ENCODE measurements at regions of chr6 and their contacts with region 1.

Region 1: GRCh38 chr6:31958741-31959739 is at the starts of genes NELFE and SKIC2:
- DNase-seq: peak in 1 of 2 donors; percentile 98
- H3K4me3 ChIP-seq: peak within 1 kb of the TSS; percentile 63 to 79
- H3K27ac ChIP-seq: peak within 1 kb of the TSS; percentile 77
- H3K4me1 ChIP-seq: peaks cover 25% of the 10 kb centered on the region
- H3K27me3 ChIP-seq: no peaks in the 10 kb centered on the region
- CTCF ChIP-seq: no peak
- POLR2A ChIP-seq: peak in 1 of 2 donors; percentile 4
- total RNA-seq, gene NELFE: 100 TPM
- total RNA-seq, gene SKIC2: 35.4 TPM

Region 2: DNA sequence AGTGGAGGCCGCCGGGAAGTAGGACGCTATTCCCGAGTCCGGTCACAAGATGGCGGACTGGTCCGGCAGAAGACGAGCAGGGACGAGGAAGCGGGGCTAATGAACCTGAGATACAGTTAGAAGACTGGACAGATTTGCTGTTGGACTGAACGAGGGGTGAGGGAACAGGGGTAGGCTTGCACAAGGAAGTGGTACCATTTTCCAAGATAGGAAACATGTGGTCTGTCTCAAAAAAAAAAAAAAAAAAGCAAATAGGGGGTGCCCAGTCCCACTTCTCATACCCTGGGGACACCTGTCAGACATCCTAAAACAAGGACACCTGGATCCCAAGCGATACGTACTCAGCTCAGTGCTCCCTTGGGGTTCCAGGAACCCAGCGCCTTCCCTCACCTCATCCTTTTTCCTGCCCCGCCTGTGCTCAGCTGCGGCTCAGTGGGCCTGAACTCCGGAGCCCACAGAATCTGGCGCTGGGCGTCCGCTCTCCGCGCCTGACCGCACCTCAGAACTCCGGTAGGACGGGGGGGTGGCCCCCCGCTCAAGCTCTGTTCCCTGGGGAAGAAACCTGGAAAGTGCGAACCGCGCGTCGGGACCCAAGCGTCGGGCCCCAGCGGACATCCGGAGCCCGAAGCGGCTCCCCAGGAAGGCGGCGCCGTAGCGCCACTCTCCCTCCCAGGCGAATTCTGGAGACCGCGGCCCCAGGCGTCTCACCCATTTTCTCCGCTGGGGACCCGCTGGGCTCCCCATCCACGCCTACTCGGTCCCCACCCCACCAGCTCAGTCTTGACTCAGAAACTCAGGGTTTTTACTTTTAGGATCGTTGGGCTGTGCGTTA is 278.0 kb before region 1 on chr6 and contains the start of gene LY6G5C:
- intact Hi-C with region 1: loop called (anchors 10 kb)
- DNase-seq: peak in 1 of 2 donors; percentile 96
- H3K4me3 ChIP-seq: peak within 1 kb of the TSS; percentile 55 to 59
- H3K27ac ChIP-seq: peak within 1 kb of the TSS; percentile 92
- H3K4me1 ChIP-seq: peaks cover 25% of the 10 kb centered on the region
- H3K27me3 ChIP-seq: no peaks in the 10 kb centered on the region
- CTCF ChIP-seq: peak; percentile 50 to 69 (median 69)
- POLR2A ChIP-seq: no peak
- total RNA-seq, gene LY6G5C: 1.7 TPM

Region 3: GRCh38 chr6:32107406-32107805 is 148.4 kb after region 1 on chr6:
- intact Hi-C with region 1: no loop called
- DNase-seq: no peak
- H3K4me3 ChIP-seq: peak overlapping the region; percentile 21 to 60
- H3K27ac ChIP-seq: peak overlapping the region; percentile 94
- H3K4me1 ChIP-seq: peaks cover 77% of the 10 kb centered on the region
- H3K27me3 ChIP-seq: no peaks in the 10 kb centered on the region
- CTCF ChIP-seq: no peak
- POLR2A ChIP-seq: no peak

Region 4: GRCh38 chr6:32203426-32204247 is 244.6 kb after region 1 on chr6:
- intact Hi-C with region 1: no loop called
- DNase-seq: no peak
- H3K4me3 ChIP-seq: no peak overlapping the region
- H3K27ac ChIP-seq: no peak overlapping the region
- H3K4me1 ChIP-seq: no peaks in the 10 kb centered on the region
- H3K27me3 ChIP-seq: no peaks in the 10 kb centered on the region
- CTCF ChIP-seq: no peak
- POLR2A ChIP-seq: no peak